ENCODE measurements at regions of chr3 and their contacts with region 1.

Region 1: GRCh38 chr3:131381444-131382291 is at the start of gene NUDT16:
- H3K4me3 Mint-ChIP-seq: peak within 1 kb of the TSS; percentile 86
- H3K27ac Mint-ChIP-seq: peak within 1 kb of the TSS; percentile 96
- H3K4me1 Mint-ChIP-seq: peaks cover 74% of the 10 kb centered on the region
- H3K27me3 Mint-ChIP-seq: no peaks in the 10 kb centered on the region

Region 2: DNA sequence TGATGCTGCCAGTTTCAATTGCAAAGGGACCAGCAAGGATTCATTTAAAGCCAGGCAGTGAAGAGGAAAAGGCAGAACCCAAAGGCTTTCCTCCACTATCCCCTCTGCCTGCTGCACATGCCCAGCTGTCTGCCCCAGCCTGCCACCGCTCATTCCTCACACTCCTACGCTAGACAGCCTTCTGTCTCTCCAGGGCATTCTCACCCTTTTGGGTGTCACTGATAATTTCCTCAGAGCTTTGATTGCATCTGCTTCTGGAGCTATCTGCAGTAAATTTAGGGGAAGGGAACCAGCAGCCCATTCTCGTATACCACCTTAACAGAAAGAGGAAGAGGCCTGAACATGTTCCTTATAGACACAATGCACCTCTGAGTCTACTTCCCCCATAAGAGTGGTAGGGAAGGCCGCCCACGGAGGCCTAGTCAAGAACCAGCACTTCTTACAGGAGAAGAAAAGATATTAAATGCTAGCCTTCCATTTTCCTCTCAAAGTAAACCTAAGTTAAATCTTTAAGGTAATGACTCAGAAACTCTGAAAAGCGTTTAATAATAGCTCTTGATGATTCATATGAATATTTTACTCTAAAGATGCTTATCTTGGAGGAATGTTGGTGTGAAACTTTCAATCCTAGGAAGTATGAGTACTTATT is 20.8 kb after region 1 on chr3:
- intact Hi-C with region 1: loop called (anchors 2 kb)
- H3K4me3 Mint-ChIP-seq: no peak overlapping the region
- H3K27ac Mint-ChIP-seq: peak overlapping the region; percentile 62
- H3K4me1 Mint-ChIP-seq: peaks cover 24% of the 10 kb centered on the region
- H3K27me3 Mint-ChIP-seq: no peaks in the 10 kb centered on the region

Region 3: GRCh38 chr3:131502530-131503245 is 121.0 kb after region 1 on chr3 and contains the start of gene MRPL3:
- intact Hi-C with region 1: loop called (anchors 2 kb)
- H3K4me3 Mint-ChIP-seq: peak within 1 kb of the TSS; percentile 100
- H3K27ac Mint-ChIP-seq: peak within 1 kb of the TSS; percentile 99
- H3K4me1 Mint-ChIP-seq: peaks cover 39% of the 10 kb centered on the region
- H3K27me3 Mint-ChIP-seq: no peaks in the 10 kb centered on the region